Activated naive CD8-positive, alpha-beta T cell treated with anti-CD3 and anti-CD28 coated beads, Interleukin-2, amount 10 ng/mL, durations not matched to agents 7 days and 5 days (primary cell): ENCODE measurements at regions of chr4 and their contacts with region 1.

Region 1: DNA sequence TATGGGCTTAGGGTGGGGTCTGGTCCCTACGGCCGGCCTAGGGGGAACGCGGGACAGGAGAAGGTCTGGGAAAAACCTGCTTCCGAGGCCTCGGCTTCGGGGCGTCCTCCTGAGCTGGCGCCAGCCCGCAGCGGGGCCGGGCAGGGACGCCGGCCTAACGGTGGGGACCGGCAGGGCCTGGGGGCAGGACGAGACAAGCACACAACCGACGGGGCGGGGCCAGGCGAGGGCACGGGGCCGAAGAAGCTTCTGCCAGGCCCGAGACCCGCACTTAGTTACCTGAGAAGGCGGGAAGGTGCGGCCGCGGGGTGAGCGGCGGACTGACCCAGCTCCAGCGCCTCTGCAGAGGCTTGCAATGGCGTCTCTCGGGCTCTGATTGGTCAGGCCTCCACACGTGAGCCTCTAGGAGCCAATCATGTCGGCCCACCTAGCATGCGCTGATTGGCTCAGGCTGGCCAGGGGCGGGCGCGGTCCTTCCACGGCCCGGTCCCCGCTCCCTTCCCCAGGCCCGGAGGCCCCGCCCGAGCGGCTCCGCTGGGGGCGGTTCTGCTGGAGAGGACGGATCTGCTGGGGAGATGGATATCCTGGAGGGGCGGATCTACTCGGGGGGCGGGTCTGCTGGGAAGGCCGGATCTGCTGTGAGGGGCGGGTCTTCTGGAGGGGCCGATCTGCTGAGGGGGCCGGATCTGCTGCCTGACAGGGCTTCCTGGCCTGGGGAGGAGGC is 44.3 kb downstream of the CPLX1 start:
- DNase-seq: peak; percentile 99
- ATAC-seq: peak; percentile 95
- H3K4me3 Mint-ChIP-seq: peak overlapping the region; percentile 84
- H3K27ac Mint-ChIP-seq: peak overlapping the region; percentile 83
- H3K4me1 Mint-ChIP-seq: peaks cover 39% of the 10 kb centered on the region
- H3K27me3 Mint-ChIP-seq: peaks cover 19% of the 10 kb centered on the region

Region 2: GRCh38 chr4:732911-733630 is 48.6 kb before region 1 on chr4:
- POLR2A ChIA-PET with region 1: no interaction called
- DNase-seq: no peak
- ATAC-seq: no peak
- H3K4me3 Mint-ChIP-seq: no peak overlapping the region
- H3K27ac Mint-ChIP-seq: no peak overlapping the region
- H3K4me1 Mint-ChIP-seq: no peaks in the 10 kb centered on the region
- H3K27me3 Mint-ChIP-seq: no peaks in the 10 kb centered on the region

Region 3: DNA sequence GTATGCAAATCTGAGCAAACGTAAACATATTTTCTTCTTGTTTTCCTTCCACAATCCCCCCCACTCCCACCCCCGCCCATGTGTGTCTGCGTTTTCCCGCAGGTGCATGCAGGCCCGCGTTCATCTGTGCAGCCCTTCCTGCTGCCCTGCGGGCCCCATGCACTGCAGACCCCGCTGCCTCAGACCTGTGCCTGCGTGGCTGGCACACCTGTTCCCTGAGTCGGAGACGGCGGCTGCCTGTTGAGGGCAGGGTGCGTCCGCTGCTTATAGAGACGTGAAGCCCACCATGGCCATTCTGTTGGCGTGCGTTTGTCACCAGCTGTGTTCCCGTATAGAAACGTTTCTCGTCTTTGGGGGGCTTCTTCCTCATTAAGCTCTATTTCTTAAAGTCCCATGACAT is 24.5 kb before region 1 on chr4:
- POLR2A ChIA-PET with region 1: no interaction called
- DNase-seq: no peak
- ATAC-seq: no peak
- H3K4me3 Mint-ChIP-seq: no peak overlapping the region
- H3K27ac Mint-ChIP-seq: no peak overlapping the region
- H3K4me1 Mint-ChIP-seq: no peaks in the 10 kb centered on the region
- H3K27me3 Mint-ChIP-seq: no peaks in the 10 kb centered on the region

Region 4: GRCh38 chr4:791871-792625 is 10.4 kb after region 1 on chr4:
- POLR2A ChIA-PET with region 1: interaction called, 41 read pairs
- DNase-seq: peak; percentile 71
- ATAC-seq: peak; percentile 58
- H3K4me3 Mint-ChIP-seq: peak overlapping the region; percentile 74
- H3K27ac Mint-ChIP-seq: peak overlapping the region; percentile 77
- H3K4me1 Mint-ChIP-seq: peaks cover 30% of the 10 kb centered on the region
- H3K27me3 Mint-ChIP-seq: peaks cover 41% of the 10 kb centered on the region

Region 5: DNA sequence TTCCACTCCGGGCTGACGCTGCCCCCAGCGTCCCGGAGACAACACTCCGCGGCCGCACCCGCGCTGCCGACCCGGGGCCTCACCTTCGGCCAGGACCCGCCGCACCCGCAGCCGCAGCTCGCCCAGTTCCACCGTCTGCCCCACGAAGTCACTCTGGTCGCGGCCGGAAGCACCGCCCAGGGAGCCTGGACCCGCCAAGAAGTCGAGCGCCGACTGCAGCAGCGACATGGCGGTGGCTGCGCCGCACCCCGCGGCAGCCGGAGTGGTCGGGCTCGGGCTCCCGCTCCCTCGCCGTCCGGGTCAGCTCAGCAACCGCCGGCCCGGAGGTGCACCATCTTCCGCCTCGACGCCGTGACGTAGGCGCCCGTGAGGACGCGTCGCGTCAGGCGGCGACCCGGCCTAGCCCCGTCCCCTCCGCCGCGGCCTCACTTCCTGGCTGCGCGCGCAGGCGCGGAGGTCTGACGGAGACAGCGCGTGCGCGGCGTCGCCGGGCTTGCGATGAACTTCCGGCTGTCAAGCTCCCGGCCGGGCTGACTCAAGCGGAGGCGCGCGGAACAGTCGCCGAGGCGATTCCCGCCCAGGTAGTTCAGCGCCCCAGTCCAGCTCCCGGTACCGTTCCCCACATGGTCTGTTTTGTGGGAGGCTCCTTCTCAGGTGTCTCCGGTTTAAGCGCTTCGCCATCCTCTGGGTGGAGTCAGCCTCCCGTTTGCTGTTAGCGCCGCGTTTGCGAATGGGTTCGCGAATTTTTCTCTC is 150.5 kb after region 1 on chr4 and contains the starts of genes GAK and TMEM175:
- POLR2A ChIA-PET with region 1: interaction called, 35 read pairs
- DNase-seq: peak; percentile 99
- ATAC-seq: peak; percentile 96
- H3K4me3 Mint-ChIP-seq: peak within 1 kb of the TSS; percentile 93
- H3K27ac Mint-ChIP-seq: peak within 1 kb of the TSS; percentile 95
- H3K4me1 Mint-ChIP-seq: peaks cover 23% of the 10 kb centered on the region
- H3K27me3 Mint-ChIP-seq: no peaks in the 10 kb centered on the region
- total RNA-seq, gene GAK: 169 to 182 TPM
- total RNA-seq, gene TMEM175: 38.2 to 39.8 TPM

Region 6: GRCh38 chr4:948051-948935 is 166.6 kb after region 1 on chr4:
- POLR2A ChIA-PET with region 1: no interaction called
- DNase-seq: peak; percentile 19
- ATAC-seq: no peak
- H3K4me3 Mint-ChIP-seq: no peak overlapping the region
- H3K27ac Mint-ChIP-seq: no peak overlapping the region
- H3K4me1 Mint-ChIP-seq: no peaks in the 10 kb centered on the region
- H3K27me3 Mint-ChIP-seq: no peaks in the 10 kb centered on the region